OCI-LY7 (cell line): ENCODE measurements at regions of chr1 and their contacts with region 1.

Region 1: DNA sequence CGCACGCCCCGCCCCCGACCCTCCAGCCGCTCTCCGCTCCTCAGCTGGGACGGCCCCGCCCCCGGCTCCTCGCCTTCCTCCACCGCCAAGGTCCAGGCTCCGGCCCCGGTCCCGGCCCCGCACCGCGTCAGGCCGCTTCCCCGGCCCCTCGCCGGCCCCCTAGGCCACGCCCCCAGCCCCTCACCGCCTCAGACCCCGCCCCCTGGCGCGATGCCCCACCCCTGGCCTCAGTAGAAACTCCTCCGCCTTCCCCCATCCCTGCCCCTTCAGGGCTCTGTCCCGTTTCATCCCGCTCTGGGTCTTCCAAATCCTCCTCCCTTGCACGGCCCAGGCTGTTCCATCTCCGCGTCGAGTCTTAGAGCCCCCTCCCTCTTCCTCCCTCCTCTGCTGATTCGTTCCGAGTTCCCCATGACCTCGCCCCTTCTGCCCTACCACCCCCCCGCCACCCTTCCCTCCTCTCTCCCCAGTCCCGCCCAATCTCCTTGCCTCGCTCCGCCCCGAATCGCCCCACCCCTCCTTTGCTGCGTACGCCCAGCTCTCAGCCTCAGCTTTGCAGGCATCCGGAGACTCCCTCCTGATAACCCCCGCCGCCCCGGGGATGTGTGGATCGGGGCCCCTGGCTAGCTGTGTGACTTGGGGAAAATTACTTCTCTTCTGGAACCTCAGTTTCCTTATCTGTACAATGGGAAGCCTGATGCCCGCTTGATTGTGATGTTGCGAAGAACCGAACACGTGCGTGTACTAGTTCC is 448 bp upstream of the ASAP3 start:
- DNase-seq: peak; percentile 92
- H3K4me3 ChIP-seq: peak overlapping the region; percentile 75
- H3K27ac ChIP-seq: peak overlapping the region; percentile 41
- H3K4me1 ChIP-seq: peaks cover 49% of the 10 kb centered on the region
- CTCF ChIP-seq: no peak

Region 2: GRCh38 chr1:23019094-23019862 is 465.1 kb before region 1 on chr1 and contains the start of gene KDM1A:
- CTCF ChIA-PET with region 1: no interaction called
- POLR2A ChIA-PET with region 1: no interaction called
- intact Hi-C with region 1: loop called (anchors 5 kb)
- DNase-seq: peak; percentile 99
- H3K4me3 ChIP-seq: peak within 1 kb of the TSS; percentile 91
- H3K27ac ChIP-seq: peak within 1 kb of the TSS; percentile 76
- H3K4me1 ChIP-seq: peaks cover 7% of the 10 kb centered on the region
- CTCF ChIP-seq: peak; percentile 41; the same call in 1 of the 2 replicates
- total RNA-seq, gene KDM1A: 95.5 and 107 TPM in 2 replicates

Region 3: GRCh38 chr1:23456226-23456625 is 28.2 kb before region 1 on chr1:
- CTCF ChIA-PET with region 1: no interaction called
- POLR2A ChIA-PET with region 1: no interaction called
- intact Hi-C with region 1: no loop called
- DNase-seq: no peak
- H3K4me3 ChIP-seq: no peak overlapping the region
- H3K27ac ChIP-seq: no peak overlapping the region
- H3K4me1 ChIP-seq: no peaks in the 10 kb centered on the region
- CTCF ChIP-seq: no peak